ENCODE measurements at regions of chr10 and their contacts with region 1.

Region 1: GRCh38 chr10:61733358-61733940 is 70.7 kb downstream of the CABCOCO1 start:
- DNase-seq: peak; percentile 71
- H3K4me3 ChIP-seq: no peak overlapping the region
- H3K27ac ChIP-seq: no peak overlapping the region
- H3K4me1 ChIP-seq: no peaks in the 10 kb centered on the region
- H3K27me3 ChIP-seq: no peaks in the 10 kb centered on the region

Region 2: DNA sequence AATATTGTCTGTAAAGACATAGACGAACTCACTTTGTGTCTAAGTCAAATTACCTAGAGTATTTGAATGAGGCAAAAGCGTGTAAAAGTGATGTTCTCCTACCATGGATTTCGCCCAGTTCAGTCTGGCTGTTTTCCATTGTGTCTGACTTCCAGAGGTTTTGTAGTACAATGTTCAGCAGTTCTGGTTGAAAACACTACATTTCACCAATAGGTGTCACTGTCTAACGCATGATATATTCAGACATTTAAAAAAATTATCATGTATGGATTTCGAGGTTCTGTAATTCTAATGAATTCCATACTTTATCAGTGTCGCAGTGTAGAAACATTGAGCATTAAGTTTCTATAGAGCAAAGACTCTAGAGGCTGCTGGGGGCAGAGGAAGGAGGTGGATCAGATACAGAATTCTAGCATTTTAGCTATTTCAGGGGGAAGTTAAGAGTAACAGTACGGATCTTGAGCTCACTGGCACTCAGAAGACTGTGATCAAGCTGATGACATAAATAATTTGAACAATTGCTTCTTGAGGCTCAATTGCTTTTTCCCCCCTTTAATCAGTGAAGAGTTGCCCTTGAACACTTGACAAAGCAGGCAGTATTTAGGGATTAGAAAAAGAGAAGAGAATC is 592.6 kb before region 1 on chr10:
- in situ Hi-C with region 1: loop called (anchors 10 kb)
- DNase-seq: peak; percentile 73
- H3K4me3 ChIP-seq: no peak overlapping the region
- H3K27ac ChIP-seq: no peak overlapping the region
- H3K4me1 ChIP-seq: peaks cover 2% of the 10 kb centered on the region; the same call in 1 of the 2 replicates
- H3K27me3 ChIP-seq: no peaks in the 10 kb centered on the region

Region 3: DNA sequence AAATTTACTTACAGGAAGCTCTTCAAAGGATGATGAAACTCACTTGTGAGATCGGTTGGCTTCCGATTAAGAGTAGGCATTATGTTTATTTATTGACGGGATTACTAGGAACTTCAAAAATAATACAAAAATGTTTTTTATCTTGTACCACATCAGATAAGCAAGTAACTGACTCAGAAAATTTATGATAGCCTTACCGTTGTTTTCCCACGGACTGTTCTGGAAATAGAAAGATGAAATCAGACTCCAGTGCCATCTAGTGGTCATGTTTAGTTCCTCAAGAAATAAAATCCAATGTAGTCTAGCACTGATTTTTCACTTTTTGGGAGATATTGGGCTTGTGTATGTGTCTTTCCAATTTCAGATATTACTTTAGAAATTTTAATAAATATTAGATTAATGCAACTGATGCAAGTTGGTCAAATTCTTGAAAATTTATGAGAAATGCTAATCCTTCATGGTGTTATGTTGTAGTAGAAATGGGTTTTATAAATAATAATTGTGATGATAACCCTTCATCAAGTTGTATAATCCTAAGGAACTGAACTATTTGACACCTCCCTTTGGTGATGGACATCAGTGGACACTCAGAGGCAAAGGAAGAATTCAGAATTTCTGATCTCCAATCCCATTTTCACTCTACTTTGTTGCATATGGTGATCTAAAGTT is 449.1 kb before region 1 on chr10:
- in situ Hi-C with region 1: loop called (anchors 10 kb)
- DNase-seq: peak; percentile 82
- H3K4me3 ChIP-seq: peak overlapping the region; percentile 60
- H3K27ac ChIP-seq: peak overlapping the region; percentile 16; the same call in 1 of the 2 replicates
- H3K4me1 ChIP-seq: peaks cover 6% of the 10 kb centered on the region
- H3K27me3 ChIP-seq: no peaks in the 10 kb centered on the region

Region 4: DNA sequence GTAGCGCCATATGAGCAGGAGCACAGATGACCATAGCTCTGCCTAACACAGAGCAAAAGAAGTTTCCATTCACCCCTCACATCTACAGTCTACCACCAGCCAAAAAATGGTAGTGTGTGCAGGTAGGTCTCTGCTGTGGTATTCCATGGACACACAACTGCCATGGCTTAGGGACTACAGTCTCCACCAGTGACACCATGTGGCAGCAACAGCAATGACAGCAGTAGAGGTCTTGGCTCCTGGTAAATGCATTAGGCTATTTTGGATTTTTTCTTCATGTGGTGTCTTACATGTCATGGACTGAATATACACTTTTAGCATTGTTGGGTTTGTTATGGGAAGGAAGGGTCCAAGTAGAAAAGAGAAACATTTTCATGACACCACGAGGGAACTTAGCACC is 140.9 kb before region 1 on chr10:
- in situ Hi-C with region 1: no loop called
- DNase-seq: peak; percentile 16
- H3K4me3 ChIP-seq: no peak overlapping the region
- H3K27ac ChIP-seq: no peak overlapping the region
- H3K4me1 ChIP-seq: peaks cover 8% of the 10 kb centered on the region
- H3K27me3 ChIP-seq: no peaks in the 10 kb centered on the region

Measured in GM23248 (cell line).